Gastrocnemius medialis (tissue), 4 donors: ENCODE measurements at regions of chr1 and their contacts with region 1.

Region 1: DNA sequence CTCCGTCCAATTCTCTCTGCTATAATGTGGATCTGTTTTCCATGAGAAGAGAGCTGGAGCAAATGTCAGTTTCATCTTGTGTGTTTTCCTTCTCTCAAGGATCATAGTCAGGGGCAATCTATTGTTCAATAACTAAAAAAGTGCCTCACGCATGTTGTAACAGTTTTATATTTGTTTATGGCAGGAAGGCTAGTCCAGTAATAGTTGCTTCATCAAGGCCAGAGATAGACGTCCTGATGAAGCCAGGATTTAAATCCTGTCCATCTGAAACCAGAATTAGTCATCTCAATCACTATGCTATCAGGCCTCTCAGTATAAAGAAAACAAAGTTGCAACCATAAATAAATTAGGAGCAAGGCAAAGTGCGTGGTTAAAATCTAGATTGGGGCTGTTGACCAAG is 30.2 kb upstream of the DUSP10 start:
- DNase-seq: no peak
- ATAC-seq: peak in 1 of 2 donors; percentile 69
- H3K4me3 ChIP-seq: no peak overlapping the region
- H3K27ac ChIP-seq: no peak overlapping the region
- H3K4me1 ChIP-seq: no peaks in the 10 kb centered on the region
- H3K27me3 ChIP-seq: no peaks in the 10 kb centered on the region
- CTCF ChIP-seq: no peak
- POLR2A ChIP-seq: no peak

Region 2: DNA sequence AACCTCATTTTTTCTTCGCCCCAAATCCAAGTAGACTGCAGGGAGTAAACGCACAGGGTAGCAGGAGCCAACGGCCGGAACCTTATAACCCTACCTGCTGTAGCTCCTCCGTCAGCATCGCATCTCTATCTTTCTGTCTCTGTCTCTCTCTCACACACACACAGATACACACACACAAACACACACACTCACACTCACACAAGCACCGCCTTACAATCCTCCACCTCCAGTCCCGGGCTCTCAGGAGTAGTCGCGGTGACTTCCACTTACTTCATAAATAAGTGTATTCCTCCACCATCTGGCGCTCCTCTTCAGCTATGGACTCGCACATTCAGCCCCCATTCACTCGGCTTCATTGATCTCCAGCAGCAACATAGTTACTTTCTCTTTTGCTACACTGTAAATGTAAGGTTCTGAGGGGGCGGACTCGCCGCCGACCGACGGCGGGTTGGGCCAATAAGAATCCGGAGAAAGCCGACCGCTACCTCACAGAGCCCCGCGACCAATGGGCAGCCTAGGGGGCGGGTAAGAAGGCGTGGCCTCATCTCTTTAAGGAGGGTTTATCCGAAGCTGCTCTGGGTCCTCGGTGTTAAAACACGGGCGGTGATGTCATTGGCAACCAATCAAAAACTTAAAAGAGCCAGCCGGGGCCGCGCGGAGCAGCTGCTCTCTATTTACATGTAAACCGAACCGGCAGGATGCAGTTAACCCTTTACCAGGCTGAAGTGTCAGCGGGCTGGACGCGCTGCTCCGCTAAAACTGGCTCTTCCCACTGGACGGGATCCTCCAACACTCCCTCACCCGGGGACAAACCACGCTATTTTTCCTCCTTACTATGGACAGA is 30.2 kb before region 1 on chr1 and contains the start of gene DUSP10:
- in situ Hi-C with region 1: no loop called
- intact Hi-C with region 1: no loop called
- DNase-seq: peak; percentile 99 to 100
- ATAC-seq: peak; percentile 85 to 89
- H3K4me3 ChIP-seq: peak within 1 kb of the TSS; percentile 71 to 93 (median 82)
- H3K27ac ChIP-seq: peak within 1 kb of the TSS; percentile 95 to 99 (median 98)
- H3K4me1 ChIP-seq: peaks cover 44 to 45% of the 10 kb centered on the region in 2 donors
- H3K27me3 ChIP-seq: no peaks in the 10 kb centered on the region
- CTCF ChIP-seq: peak in 1 of 5 experiments; percentile 14
- POLR2A ChIP-seq: peak; percentile 65 to 95
- total RNA-seq, gene DUSP10: 2.9 to 7.0 (median 5.9) TPM

Region 3: DNA sequence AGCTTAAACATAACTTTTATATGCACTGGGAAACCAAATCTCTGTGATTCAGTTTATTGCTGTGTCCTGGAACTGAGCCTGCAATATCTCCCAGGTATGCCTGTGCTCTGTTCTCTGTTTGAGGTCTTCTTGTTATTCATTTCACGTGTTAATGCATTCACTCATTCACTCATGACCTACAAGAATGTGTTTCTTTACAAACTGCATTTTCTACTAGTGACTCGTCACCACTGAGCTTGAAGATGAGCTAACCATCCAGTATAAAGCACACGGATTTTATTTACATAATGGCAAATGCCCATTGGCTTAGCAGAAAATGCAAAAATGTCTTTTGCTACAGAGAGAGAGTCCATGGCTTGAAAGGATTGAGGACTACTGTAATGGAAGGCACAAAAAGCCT is 44.8 kb after region 1 on chr1:
- in situ Hi-C with region 1: no loop called
- intact Hi-C with region 1: loop called (anchors 5 kb)
- DNase-seq: no peak
- ATAC-seq: no peak
- H3K4me3 ChIP-seq: no peak overlapping the region
- H3K27ac ChIP-seq: no peak overlapping the region
- H3K4me1 ChIP-seq: no peaks in the 10 kb centered on the region
- H3K27me3 ChIP-seq: no peaks in the 10 kb centered on the region
- CTCF ChIP-seq: no peak
- POLR2A ChIP-seq: no peak